ENCODE measurements at regions of chr2 and their contacts with region 1.

Region 1: GRCh38 chr2:64914735-64915509 is 74.3 kb upstream of the SLC1A4 start:
- DNase-seq: no peak
- H3K4me3 ChIP-seq: no peak overlapping the region
- H3K27ac ChIP-seq: no peak overlapping the region
- H3K4me1 ChIP-seq: peaks cover 3% of the 10 kb centered on the region
- H3K27me3 ChIP-seq: no peaks in the 10 kb centered on the region
- CTCF ChIP-seq: no peak

Region 2: GRCh38 chr2:64243081-64244036 is 671.6 kb before region 1 on chr2:
- CTCF ChIA-PET with region 1: no interaction called
- dilution Hi-C with region 1: no loop called
- in situ Hi-C with region 1: no loop called
- intact Hi-C with region 1: no loop called
- DNase-seq: peak; percentile 59
- H3K4me3 ChIP-seq: no peak overlapping the region
- H3K27ac ChIP-seq: peak overlapping the region; percentile 84
- H3K4me1 ChIP-seq: peaks cover 23% of the 10 kb centered on the region
- H3K27me3 ChIP-seq: no peaks in the 10 kb centered on the region
- CTCF ChIP-seq: no peak

Region 3: DNA sequence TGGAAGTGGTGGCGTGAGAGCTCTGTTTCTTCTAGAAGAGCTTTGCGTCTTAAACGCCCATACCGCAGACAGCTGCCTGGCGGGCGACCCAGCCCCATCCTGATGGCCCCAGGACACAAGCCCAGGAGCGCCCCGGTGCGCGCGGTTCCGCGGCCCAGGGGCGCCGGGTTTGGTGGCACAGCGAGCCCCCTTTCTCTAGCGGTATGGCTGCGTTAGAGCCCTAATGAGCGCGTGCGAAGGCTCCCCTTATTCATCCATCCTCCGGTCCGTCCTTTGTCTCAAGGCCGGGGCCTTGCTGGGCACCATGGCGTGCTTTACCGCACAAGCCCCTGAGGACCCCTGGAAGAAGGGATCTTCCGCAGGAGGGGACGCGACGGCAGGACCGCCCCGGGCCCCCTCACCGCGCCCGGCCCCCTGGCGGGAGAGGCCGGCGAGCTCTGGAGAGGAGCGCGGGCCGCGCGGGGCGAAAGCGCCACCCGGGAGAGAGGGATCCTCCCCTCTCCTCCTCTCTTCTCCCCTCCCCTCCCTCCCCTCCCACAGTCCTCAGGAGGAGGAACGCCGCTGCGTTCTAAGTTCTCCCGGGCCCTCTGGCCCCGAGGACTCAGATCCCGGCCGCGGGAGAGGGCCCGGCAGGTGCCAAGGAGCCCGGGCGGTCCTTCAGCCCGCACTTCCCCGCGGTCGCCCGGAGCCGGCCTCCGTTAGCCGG is 73.7 kb after region 1 on chr2:
- CTCF ChIA-PET with region 1: interaction called, 7 read pairs
- dilution Hi-C with region 1: no loop called
- in situ Hi-C with region 1: no loop called
- intact Hi-C with region 1: loop called (anchors 1 kb)
- DNase-seq: peak; percentile 83
- H3K4me3 ChIP-seq: peak overlapping the region; percentile 59 to 69 (median 63)
- H3K27ac ChIP-seq: peak overlapping the region; percentile 40
- H3K4me1 ChIP-seq: peaks cover 19% of the 10 kb centered on the region
- H3K27me3 ChIP-seq: no peaks in the 10 kb centered on the region
- CTCF ChIP-seq: peak; percentile 4 to 47

Region 4: GRCh38 chr2:65040400-65041261 is 125.7 kb after region 1 on chr2:
- CTCF ChIA-PET with region 1: interaction called, 5 read pairs
- dilution Hi-C with region 1: loop called (anchors 5 kb)
- in situ Hi-C with region 1: loop called (anchors 5 kb)
- intact Hi-C with region 1: loop called (anchors 1 kb)
- DNase-seq: peak; percentile 67
- H3K4me3 ChIP-seq: no peak overlapping the region
- H3K27ac ChIP-seq: no peak overlapping the region
- H3K4me1 ChIP-seq: no peaks in the 10 kb centered on the region
- H3K27me3 ChIP-seq: no peaks in the 10 kb centered on the region
- CTCF ChIP-seq: peak; percentile 96 to 98

Region 5: DNA sequence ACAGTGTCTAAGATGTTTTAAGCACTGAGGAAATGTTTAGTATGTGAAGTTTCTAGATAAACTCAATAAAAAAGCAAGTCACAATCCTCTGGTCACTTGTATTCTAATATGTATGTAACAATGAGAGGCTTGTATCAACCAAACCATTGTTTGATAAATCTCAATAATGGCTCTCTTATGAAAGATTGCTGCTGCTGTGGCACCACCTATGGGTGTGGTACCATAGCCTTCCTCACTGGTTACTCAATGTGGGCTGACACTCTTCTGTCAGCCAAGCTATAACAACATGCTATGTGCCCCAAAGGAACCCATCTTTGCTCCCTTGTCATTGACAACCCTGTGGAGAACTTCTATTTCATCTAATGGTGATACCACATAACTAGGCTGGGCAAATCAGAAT is 227.6 kb after region 1 on chr2:
- CTCF ChIA-PET with region 1: interaction called, 3 read pairs
- dilution Hi-C with region 1: no loop called
- in situ Hi-C with region 1: no loop called
- intact Hi-C with region 1: loop called (anchors 2 kb)
- DNase-seq: peak; percentile 50
- H3K4me3 ChIP-seq: no peak overlapping the region
- H3K27ac ChIP-seq: no peak overlapping the region
- H3K4me1 ChIP-seq: peaks cover 7% of the 10 kb centered on the region
- H3K27me3 ChIP-seq: no peaks in the 10 kb centered on the region
- CTCF ChIP-seq: peak; percentile 41 to 62

Region 6: DNA sequence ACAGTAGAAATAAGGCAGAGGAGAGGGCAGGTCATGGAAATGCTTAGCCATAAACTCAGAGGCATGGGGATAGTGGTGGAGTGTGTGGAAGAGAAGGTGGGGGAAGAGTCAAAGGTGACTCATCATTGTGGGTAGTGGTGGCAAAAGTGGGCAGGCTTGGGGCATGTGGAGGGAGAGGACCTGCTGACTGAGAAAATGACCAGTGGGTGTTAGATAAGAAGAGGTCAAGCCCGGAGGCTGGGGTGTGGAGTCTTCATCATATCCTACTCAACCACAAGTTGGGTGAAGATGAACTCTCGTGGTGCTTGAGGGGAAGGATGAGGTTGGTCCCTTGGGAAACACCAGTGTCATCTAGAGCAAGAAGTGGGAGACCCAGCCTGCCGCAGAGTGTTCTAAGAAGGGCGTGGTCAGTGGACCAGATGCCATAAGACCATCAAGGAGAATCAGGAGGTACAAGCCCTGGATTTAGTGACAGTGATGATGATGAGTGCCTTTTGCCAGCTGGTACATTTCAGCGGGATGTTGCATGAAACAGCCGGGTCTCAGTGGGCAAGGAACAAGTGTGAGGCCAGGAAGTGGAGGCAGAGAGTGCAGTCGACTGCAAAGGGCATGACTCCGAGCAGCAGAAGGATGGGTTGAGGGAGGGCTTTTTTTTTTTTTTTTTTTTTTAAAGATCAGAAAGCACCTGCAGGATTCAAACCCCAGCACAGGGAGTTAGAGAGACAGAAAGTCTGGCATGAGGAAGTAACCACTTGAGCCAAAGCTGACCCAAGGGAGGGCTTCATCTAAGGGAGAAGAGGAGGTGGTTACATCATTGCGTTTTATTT is 640.1 kb after region 1 on chr2:
- CTCF ChIA-PET with region 1: no interaction called
- dilution Hi-C with region 1: no loop called
- in situ Hi-C with region 1: loop called (anchors 25 kb)
- intact Hi-C with region 1: no loop called
- DNase-seq: peak; percentile 40
- H3K4me3 ChIP-seq: no peak overlapping the region
- H3K27ac ChIP-seq: no peak overlapping the region
- H3K4me1 ChIP-seq: peaks cover 6% of the 10 kb centered on the region
- H3K27me3 ChIP-seq: no peaks in the 10 kb centered on the region
- CTCF ChIP-seq: no peak

Measured in mammary epithelial cell (primary cell).